ENCODE measurements at regions of chr2 and their contacts with region 1.

Region 1: DNA sequence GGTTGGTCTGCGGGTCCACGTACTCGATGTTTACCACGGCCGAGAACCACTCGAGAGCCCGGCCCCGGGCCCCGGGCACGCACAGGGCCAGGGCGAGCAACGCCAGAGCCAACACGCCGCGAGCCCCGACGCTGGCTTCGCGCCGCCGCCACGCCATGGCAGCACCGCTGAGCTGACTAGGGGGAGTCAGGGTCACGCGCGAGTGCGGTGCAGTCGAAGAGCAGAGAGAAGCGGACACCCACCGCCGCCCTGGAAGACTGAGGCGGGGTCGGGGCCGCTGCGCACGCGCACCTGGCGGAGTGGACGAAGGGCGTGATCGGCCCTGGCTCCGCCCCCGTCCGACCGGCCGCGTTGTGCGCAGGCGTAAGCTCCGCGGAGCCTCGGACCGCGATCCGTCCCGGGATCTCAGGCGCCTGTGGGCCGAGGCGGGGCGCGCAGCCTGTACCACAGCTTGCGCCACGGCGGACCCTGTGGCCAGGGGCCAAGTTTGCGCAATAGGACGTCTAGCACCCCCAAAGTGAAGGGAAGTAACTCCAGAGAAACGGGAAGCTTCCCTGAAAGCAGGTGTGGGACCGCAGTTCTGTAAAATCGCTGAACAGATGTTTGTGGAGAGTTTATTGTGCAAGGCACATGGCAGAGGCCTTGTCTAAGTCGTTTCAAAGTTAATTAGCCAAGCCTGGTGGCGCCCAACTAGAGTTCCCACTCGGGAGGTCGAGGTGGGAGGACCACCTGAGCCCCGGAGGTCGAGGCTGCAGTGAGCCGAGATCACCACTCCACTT is at the start of gene RNF149:
- DNase-seq: peak; percentile 94
- ATAC-seq: peak; percentile 63
- H3K4me3 Mint-ChIP-seq: peak within 1 kb of the TSS; percentile 82
- H3K27ac Mint-ChIP-seq: peak within 1 kb of the TSS; percentile 98
- H3K4me1 Mint-ChIP-seq: peaks cover 67% of the 10 kb centered on the region
- H3K27me3 Mint-ChIP-seq: no peaks in the 10 kb centered on the region
- total RNA-seq, gene RNF149: 23.4 to 29.5 TPM

Region 2: DNA sequence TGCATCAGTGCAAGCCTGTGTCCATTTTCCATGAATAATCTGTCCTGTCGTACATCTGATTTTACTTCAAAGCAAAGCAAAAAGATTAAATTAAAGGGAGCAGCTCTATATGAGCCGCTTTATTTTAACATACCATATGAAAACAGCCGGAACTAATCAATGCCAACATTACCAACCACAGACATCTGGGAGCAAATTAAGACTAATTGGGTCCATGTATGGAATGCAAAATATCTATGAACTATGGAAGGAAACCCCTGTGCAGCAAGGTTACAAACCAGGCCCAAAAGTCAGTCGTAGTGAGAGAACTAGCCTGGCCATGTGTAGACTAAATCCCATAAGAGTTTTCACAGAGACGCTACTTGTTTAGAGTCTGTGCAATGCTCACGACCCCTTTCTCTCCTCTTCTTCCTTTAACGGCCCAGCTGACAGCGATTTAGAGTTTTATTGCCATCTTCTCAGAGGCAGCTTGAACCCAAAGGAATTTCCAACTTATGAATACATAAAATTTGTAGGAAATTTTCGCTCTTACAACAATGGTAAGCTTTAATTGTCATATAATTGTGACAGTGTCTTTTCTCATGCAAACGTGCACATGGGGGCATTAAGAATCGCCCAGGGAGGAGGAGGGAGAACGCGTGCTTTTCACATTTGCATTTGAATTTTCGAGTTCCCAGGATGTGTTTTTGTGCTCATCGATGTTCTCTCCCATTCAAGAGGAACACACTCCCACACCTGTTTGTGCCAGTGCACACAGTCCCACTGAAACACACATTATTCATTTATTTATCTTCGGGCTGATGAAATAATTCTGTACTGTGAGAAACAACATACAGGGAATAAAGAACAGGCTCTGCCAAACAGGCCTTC is 359.4 kb before region 1 on chr2:
- CTCF ChIA-PET with region 1: no interaction called
- POLR2A ChIA-PET with region 1: no interaction called
- intact Hi-C with region 1: no loop called
- DNase-seq: no peak
- ATAC-seq: no peak
- H3K4me3 Mint-ChIP-seq: no peak overlapping the region
- H3K27ac Mint-ChIP-seq: no peak overlapping the region
- H3K4me1 Mint-ChIP-seq: peaks cover 12% of the 10 kb centered on the region
- H3K27me3 Mint-ChIP-seq: no peaks in the 10 kb centered on the region

Region 3: DNA sequence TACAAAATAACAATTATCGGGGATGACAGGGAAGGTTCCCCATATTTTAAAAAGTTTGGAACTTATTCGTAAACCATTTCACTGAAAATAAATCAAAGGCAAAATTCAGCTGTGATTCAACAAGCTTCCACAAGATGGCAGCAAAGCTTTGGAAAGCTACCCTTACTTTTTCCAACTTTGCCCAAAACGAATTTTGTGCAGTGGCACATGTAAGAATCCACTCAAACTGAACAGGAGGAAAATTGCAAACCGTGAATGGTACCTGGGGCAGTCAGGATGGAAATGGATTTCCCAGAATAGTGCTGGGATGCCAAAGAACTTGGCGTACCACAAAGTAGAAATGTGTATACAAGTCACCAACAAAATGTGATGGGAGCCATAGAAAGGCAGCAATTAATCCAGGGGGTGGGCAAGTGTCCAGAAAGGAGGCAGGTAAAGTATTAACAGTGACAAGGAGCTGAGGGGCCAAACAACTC is 295.9 kb before region 1 on chr2:
- CTCF ChIA-PET with region 1: interaction called, 3 read pairs
- POLR2A ChIA-PET with region 1: no interaction called
- intact Hi-C with region 1: loop called in 1 of 2 experiments (anchors 5 kb)
- DNase-seq: peak; percentile 49
- ATAC-seq: no peak
- H3K4me3 Mint-ChIP-seq: no peak overlapping the region
- H3K27ac Mint-ChIP-seq: peak overlapping the region; percentile 55
- H3K4me1 Mint-ChIP-seq: peaks cover 31% of the 10 kb centered on the region
- H3K27me3 Mint-ChIP-seq: no peaks in the 10 kb centered on the region

Region 4: GRCh38 chr2:101223814-101224231 is 84.8 kb before region 1 on chr2:
- CTCF ChIA-PET with region 1: no interaction called
- POLR2A ChIA-PET with region 1: no interaction called
- intact Hi-C with region 1: no loop called
- DNase-seq: peak; percentile 64
- ATAC-seq: peak; percentile 95
- H3K4me3 Mint-ChIP-seq: no peak overlapping the region
- H3K27ac Mint-ChIP-seq: peak overlapping the region; percentile 9
- H3K4me1 Mint-ChIP-seq: peaks cover 12% of the 10 kb centered on the region
- H3K27me3 Mint-ChIP-seq: no peaks in the 10 kb centered on the region

Region 5: GRCh38 chr2:101272045-101272784 is 36.4 kb before region 1 on chr2:
- CTCF ChIA-PET with region 1: interaction called, 4 read pairs
- POLR2A ChIA-PET with region 1: no interaction called
- intact Hi-C with region 1: loop called (anchors 1 kb)
- DNase-seq: no peak
- ATAC-seq: peak; percentile 97
- H3K4me3 Mint-ChIP-seq: no peak overlapping the region
- H3K27ac Mint-ChIP-seq: peak overlapping the region; percentile 69
- H3K4me1 Mint-ChIP-seq: peaks cover 41% of the 10 kb centered on the region
- H3K27me3 Mint-ChIP-seq: no peaks in the 10 kb centered on the region

Region 6: DNA sequence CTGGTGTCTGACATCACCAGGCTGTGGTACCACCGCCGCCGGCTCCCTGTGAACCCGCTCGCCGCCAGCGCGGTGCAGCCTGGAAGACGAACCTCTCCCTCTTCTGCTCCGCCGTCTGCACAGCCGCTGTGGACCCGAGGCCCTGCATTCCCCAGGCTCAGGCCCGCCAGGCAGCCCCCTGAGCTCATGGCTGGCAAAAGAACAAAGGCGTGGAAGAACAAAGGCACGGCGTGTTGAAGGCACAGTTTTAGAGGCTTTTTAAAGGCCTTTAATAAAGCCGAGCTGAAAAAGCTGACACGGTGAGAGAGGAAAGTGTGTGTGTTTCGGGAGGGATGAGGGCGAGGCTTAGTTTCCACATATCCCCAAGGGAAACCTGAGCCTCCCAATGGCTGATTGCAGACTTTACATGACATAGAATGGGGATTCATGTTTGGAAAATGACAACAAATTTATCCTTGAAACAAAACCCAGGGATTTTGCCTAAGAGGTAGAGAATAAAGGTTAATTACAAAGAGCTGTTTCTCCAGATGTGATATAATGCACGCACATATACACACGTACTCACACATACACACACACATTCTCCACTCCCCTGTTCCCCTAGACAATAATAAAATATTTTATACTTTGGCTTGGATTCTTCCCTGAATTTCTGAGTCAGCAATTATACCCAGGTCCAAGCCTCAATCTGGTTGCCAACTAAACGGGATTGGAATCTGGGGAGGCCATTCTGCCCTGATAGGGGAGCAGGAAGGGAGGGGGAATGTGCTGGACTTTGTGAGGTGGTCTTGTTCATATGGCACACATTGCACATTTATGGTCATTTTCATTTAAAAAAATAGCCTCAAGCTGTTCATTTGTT is 126.6 kb after region 1 on chr2:
- CTCF ChIA-PET with region 1: no interaction called
- POLR2A ChIA-PET with region 1: no interaction called
- intact Hi-C with region 1: no loop called
- DNase-seq: no peak
- ATAC-seq: no peak
- H3K4me3 Mint-ChIP-seq: no peak overlapping the region
- H3K27ac Mint-ChIP-seq: no peak overlapping the region
- H3K4me1 Mint-ChIP-seq: peaks cover under 1% of the 10 kb centered on the region
- H3K27me3 Mint-ChIP-seq: no peaks in the 10 kb centered on the region

Region 7: DNA sequence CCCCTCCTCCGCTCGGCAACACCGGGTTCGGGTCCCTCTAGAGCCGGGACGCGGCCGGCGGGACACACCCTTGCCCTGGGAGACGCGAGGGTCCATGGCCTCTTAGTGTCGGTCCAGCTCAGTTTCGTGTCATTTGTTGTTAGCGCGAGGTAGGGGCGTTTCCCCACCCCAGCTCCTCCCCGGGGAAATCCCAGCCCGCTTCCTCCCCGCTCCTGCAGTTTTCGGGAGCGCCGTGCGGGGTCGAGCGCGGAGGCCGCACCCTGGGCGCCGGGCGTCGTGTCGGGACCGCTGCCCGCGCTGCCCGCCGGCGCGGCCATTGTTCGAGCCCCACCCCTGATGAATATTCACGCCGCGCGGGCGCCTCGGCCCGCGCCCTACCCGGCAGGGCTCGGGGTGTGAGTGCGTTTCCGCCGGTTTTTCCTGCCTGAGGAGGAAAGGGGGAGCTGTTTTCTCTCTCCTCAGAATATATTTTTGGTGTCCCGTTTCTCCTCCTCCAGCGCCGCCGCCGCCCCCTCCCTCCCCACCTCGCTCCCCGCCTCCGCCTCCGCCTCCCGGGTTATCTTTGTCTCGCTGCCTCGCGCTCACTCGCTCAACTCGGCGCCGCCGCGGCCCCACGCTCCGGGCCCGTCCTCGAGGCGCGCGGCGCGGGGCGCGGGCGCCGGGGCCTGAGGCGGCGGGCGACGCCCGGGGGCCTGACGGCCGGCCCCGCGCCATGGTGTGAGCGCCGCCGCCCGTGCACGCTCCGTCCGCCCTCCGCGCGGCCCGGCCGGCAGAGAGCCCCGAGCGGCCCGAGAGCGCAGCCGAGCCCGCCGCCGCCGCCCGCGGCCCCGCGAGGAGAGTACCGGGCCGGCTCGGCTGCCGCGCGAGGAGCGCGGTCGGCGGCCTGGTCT is 388.7 kb after region 1 on chr2 and contains the start of gene MAP4K4:
- CTCF ChIA-PET with region 1: no interaction called
- POLR2A ChIA-PET with region 1: no interaction called
- intact Hi-C with region 1: loop called (anchors 2 to 5 kb)
- DNase-seq: peak; percentile 85
- ATAC-seq: peak; percentile 52
- H3K4me3 Mint-ChIP-seq: no peak within 1 kb of the TSS
- H3K27ac Mint-ChIP-seq: peak within 1 kb of the TSS; percentile 68
- H3K4me1 Mint-ChIP-seq: peaks cover 30% of the 10 kb centered on the region
- H3K27me3 Mint-ChIP-seq: no peaks in the 10 kb centered on the region
- total RNA-seq, gene MAP4K4: 62.3 to 70.2 TPM

Region 8: DNA sequence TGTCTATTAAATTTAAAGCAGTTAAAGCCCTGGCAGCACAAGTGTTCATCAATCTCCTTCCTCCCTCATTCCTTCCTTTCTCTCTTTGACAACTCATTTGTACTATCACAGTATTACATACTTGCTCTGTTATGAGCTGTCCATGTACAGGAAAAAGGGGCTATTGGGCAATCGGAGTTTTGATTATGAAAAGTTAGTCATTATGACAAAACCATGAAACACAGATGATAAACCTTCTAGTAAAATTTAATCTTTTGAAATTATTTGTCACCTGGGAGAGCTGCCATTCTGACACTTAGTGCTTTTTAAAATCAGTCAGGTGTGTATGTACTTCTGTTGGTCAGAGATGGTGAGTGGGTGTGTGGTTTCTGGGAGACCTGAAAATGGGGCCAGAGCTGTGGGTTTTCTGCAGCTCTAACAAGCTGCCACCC is 428.3 kb after region 1 on chr2:
- CTCF ChIA-PET with region 1: no interaction called
- POLR2A ChIA-PET with region 1: no interaction called
- intact Hi-C with region 1: loop called in 1 of 2 experiments (anchors 5 kb)
- DNase-seq: peak; percentile 77
- ATAC-seq: peak; percentile 86
- H3K4me3 Mint-ChIP-seq: no peak overlapping the region
- H3K27ac Mint-ChIP-seq: peak overlapping the region; percentile 51
- H3K4me1 Mint-ChIP-seq: peaks cover 84% of the 10 kb centered on the region
- H3K27me3 Mint-ChIP-seq: no peaks in the 10 kb centered on the region

Region 9: DNA sequence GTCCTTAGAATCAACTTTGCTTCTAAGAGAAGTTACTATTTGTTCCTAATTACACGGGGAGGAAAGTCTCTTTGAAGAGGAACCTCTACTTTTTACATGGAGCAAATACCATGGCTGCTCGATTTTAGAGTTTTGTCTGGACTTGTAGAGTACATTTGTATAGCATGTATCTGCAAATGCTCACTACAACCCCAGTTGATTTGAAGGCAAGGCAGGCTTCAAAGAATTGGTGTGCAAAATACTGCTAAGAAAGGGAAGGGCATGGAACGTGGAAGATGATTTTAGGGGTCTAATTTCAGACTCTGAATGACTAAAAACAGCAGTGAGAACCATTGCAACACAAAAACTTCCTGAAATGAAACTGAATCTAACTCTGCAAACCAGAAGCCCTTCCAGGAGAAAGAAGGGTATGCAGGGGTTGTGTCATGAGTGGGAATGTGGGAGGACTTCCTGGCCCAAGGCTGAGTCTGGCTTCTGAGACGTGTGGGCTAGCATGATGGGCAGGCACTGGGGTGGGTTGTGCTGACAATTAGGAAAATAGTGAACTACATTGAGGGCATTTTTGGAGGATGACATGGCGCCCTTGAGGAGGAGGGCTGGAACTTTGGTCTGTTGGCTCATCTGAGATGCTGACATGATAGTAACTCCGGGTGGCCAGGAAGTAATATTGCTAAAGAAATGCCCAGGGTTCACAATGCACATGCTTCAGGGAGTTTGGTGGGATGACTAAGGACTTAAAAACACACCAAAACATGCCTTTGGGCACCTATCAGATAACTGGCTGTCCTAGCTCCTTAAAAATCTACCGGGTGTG is 664.2 kb after region 1 on chr2:
- CTCF ChIA-PET with region 1: no interaction called
- POLR2A ChIA-PET with region 1: no interaction called
- intact Hi-C with region 1: no loop called
- DNase-seq: no peak
- ATAC-seq: no peak
- H3K4me3 Mint-ChIP-seq: no peak overlapping the region
- H3K27ac Mint-ChIP-seq: peak overlapping the region; percentile 14
- H3K4me1 Mint-ChIP-seq: peaks cover 12% of the 10 kb centered on the region
- H3K27me3 Mint-ChIP-seq: peaks cover 2% of the 10 kb centered on the region

Region 10: DNA sequence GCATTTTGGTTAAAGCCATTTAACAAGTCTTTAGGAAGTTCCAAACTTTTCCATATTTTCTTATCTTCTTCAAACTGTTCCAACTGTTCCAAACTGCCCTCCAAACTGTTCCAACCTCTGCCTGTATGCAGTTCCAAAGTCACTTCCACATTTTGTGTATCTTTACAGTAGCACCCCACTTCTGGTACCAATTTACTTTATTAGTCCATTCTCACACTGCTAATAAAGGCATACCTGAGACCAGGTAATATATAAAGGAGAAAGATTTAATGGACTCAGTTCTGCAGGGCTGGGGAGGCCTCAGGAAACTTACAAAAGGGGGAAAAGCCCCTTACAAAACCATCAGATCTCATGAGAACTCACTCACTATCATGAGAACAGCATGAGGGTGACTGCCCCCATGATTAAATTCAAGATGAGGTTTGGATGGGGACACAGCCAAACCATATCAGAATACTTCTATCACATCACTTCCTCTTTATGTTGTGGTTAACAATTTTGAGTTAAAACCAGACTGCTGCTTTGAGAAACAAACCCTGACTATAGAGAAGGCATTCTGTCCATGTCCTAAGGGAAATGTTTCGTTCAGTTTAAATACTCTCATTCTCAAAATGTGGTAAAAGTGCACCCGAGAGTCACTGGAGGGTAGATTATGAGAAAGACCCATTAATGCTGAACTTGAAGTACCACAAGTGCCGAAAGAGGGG is 1057.9 kb after region 1 on chr2:
- CTCF ChIA-PET with region 1: no interaction called
- POLR2A ChIA-PET with region 1: no interaction called
- intact Hi-C with region 1: loop called in 1 of 2 experiments (anchors 5 kb)
- DNase-seq: peak; percentile 35
- ATAC-seq: peak; percentile 54
- H3K4me3 Mint-ChIP-seq: peak overlapping the region; percentile 55
- H3K27ac Mint-ChIP-seq: peak overlapping the region; percentile 93
- H3K4me1 Mint-ChIP-seq: peaks cover 73% of the 10 kb centered on the region
- H3K27me3 Mint-ChIP-seq: no peaks in the 10 kb centered on the region

Measured in activated CD4-positive, alpha-beta T cell treated with anti-CD3 and anti-CD28 coated beads for 36 hours (primary cell).